ENCODE measurements at regions of chr2 and their contacts with region 1.

Region 1: GRCh38 chr2:219160186-219161017 is at the start of gene NHEJ1:
- ATAC-seq: peak; percentile 83 to 92 (median 88)
- H3K4me3 ChIP-seq: peak within 1 kb of the TSS; percentile 43 to 56 (median 50)
- H3K27ac ChIP-seq: peak within 1 kb of the TSS; percentile 87 to 94
- H3K4me1 ChIP-seq: peaks cover 0 to 4% of the 10 kb centered on the region in 2 donors
- total RNA-seq, gene NHEJ1: 7.3 to 55.7 (median 15.5) TPM

Region 2: DNA sequence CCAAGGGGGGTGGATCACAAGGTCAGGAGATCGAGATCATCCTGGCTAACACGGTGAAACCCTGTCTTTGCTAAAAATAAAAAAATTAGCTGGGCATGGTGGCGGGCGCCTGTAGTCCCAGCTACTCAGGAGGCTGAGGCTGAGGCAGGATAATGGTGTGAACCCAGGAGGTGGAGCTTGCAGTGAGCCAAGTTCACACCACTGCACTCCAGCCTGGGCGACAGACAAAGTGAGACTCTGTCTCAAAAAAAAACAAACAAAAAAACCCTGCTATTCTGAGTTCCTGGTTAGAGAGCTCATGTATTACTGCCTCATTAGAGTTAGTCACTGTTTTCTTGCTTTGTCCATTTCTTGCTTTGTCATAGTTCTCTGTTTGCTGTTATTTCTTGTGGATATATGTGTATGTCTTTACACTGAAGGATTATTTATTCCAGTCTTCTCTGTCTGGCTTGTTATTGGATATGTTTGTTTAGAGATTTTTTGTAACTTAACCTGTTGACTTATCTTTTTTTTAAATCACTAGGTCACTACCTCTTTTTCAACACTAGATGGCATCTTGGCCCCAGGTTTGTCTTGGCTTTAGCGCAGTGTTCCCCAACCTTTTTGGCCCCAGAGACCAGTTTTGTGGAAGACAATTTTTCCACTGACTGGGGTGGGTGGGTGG is 432.8 kb before region 1 on chr2:
- in situ Hi-C with region 1: no loop called
- ATAC-seq: no peak
- H3K4me3 ChIP-seq: no peak overlapping the region
- H3K27ac ChIP-seq: no peak overlapping the region
- H3K4me1 ChIP-seq: peaks cover 0 to 4% of the 10 kb centered on the region in 2 donors

Region 3: GRCh38 chr2:219057709-219058540 is 102.5 kb before region 1 on chr2:
- in situ Hi-C with region 1: loop called in 2 of 9 experiments (anchors 10 to 25 kb)
- ATAC-seq: peak; percentile 36 to 95 (median 93)
- H3K4me3 ChIP-seq: peak overlapping the region; percentile 18 to 35 (median 19)
- H3K27ac ChIP-seq: no peak overlapping the region
- H3K4me1 ChIP-seq: peaks cover 0 to 5% of the 10 kb centered on the region in 2 donors

Region 4: DNA sequence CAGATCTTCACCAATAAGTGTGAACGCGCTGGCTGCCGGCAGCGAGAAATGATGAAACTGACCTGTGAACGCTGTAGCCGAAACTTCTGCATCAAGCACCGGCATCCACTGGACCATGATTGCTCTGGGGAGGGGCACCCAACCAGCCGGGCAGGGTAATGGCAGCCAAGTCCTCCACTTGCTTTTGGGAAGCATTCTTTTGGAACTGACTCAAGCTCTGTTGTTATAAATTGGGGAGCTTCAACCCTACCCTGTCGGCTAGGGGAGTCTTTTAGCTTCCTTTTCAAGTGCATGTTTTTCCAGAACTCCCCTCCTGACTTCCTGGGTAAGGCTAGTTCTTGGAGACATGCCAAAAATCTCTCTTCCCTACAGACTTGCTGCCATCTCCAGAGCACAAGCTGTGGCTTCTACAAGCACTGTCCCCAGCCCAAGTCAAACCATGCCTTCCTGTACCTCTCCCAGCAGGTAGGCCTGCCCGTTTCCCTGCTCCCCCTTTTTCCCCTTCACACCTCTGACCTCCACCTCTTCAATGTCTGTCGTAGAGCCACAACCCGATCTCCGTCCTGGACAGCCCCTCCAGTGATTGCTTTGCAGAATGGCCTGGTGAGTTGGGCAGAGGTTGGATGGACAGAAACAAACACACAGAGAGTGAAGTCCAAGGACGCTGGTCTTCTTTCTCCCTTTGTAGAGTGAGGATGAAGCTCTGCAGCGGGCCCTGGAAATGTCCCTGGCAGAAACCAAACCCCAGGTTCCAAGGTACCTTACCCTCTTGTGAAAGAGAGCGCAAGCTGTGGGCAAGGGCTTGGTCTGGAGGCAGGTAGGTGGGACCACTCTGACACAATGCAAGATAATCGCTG is 47.7 kb after region 1 on chr2:
- in situ Hi-C with region 1: no loop called
- ATAC-seq: no peak
- H3K4me3 ChIP-seq: peak overlapping the region in 3 of 5 donors; percentile 55 to 72 (median 57)
- H3K27ac ChIP-seq: peak overlapping the region in 1 of 2 donors; percentile 87
- H3K4me1 ChIP-seq: peaks cover 7 to 11% of the 10 kb centered on the region in 2 donors

Measured in motor neuron (in vitro differentiated cells).